ENCODE measurements at regions of chr14 and their contacts with region 1.

Region 1: GRCh38 chr14:65164068-65164824 is 61.9 kb upstream of the MAX start:
- DNase-seq: no peak

Region 2: GRCh38 chr14:65019944-65020566 is 144.2 kb before region 1 on chr14:
- intact Hi-C with region 1: no loop called
- DNase-seq: no peak

Region 3: GRCh38 chr14:65131301-65131701 is 32.9 kb before region 1 on chr14:
- intact Hi-C with region 1: loop called in 1 of 2 experiments (anchors 1 kb)
- DNase-seq: no peak

Region 4: DNA sequence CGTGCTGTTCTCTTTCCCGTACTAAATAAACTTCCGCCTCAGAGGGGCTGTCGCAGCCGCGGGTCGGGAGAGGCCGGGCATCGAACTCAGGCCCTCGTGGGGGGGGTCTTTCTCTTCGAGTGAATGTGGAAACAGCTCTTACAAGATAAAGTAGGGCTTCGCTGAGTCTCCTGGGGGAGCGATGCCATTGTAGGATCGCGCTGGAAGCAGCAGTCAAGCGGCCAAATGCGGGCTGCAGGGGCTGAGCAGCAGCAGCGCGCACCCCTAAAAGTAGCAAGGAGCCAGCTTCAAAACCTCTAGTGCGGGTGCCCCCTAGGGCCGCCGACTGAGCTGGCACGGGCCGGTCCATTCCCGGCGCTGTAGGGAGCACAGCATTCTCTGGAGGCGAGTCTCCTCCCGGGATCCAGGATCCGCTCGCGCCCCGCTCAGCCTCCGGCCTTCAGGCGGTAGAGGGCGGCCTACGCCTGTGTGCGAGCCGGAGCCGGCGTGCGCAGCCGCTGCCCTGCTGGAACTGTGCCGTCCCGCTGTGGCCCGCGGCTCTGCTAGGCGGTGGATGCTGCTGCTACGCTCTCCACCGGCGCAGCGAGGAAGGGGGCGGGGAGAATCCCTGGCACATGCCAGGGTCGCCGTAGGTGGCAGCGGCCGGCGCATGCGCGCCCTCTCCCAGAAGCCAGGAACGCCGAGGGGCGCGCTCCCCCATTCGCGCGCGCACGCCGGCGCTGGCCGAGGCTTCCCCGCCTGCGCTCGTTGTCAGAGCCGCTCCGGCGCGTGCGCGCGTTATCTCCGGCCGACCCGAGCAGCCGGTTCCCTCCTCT is 248.0 kb after region 1 on chr14 and contains the start of gene FUT8:
- intact Hi-C with region 1: loop called in 1 of 2 experiments (anchors 10 kb)
- DNase-seq: peak; percentile 99
- total RNA-seq, gene FUT8: 26.0 to 35.9 TPM

Region 5: DNA sequence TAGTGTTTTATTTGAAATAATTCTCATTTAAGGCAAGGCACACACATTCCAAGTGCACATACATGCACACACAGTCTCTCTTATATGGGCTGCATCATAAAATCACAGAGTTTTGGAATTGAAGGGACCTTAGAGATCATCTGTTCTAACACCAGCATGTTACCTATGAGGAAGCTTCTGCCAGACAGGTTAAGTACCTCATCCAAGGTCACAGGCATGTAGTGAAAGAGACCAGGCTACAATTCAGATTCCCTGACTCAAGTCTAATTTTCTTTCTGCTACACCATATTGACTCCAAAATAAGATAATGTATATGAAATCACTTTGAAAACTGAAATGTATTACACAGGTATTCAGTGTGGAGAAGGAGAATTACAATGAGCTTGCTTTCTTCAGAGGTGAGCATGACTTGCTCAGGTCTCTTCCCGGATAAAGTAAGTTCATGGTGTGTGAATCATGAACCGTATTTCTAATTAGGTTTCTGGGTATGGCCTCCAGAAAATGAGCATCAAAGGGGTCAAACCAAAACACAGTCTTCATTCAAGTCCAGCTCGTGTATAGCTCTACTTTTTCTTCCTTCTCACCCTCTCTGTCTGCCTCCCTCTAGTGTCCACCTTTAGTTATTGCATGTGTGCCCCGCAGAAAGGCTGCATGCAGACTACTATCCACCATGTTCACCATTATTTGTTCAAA is 660.2 kb after region 1 on chr14:
- intact Hi-C with region 1: loop called (anchors 10 kb)
- DNase-seq: no peak